Esophagus muscularis mucosa (tissue), 4 donors: ENCODE measurements at regions of chr3 and their contacts with region 1.

Region 1: DNA sequence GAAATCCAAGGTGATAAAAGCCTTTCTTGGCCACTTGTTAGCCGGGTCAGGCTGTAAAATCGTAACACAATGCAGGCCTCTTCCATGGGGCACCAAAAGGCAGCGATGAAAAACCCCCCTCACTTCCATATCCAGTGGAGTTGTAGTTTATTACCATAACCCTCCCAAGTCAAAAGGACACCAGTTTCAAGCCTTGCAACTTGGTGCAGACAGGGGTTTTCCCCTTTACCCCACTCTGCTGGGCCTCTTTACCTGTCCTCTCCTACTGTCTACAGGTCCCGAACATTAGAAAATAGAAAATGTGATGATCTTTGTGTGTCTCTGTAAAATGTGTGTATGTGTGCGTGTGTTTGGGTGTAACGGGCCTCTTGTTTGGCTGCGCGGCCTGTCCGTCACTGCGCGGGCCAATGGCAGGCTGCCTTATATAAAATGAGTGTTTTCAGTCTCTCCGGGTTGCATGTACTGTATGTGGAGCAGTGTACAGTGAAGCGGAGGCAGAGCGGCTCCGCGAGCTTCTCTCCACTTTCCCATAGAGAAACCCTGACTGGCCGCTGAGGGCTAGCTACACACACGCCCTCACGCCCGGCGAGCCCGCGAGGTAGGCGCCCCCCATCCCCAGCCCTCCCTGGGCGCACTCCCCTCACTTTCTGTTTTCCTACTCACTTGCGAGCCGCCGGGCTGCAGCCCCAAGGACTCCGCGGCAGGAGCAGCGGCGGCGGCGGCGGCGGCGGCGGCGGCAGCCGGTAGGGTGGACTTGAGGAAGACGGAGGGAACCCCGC is at the start of gene BBX:
- DNase-seq: peak; percentile 99
- H3K4me3 ChIP-seq: peak within 1 kb of the TSS; percentile 76 to 95 (median 86)
- H3K27ac ChIP-seq: peak within 1 kb of the TSS; percentile 90 to 97 (median 94)
- H3K4me1 ChIP-seq: peaks cover 9 to 24% (median 20%) of the 10 kb centered on the region in 4 donors
- H3K27me3 ChIP-seq: no peaks in the 10 kb centered on the region
- CTCF ChIP-seq: no peak
- EP300 ChIP-seq: no peak
- POLR2A ChIP-seq: peak; percentile 51
- total RNA-seq, gene BBX: 49.2 to 78.9 (median 77.9) TPM

Region 2: DNA sequence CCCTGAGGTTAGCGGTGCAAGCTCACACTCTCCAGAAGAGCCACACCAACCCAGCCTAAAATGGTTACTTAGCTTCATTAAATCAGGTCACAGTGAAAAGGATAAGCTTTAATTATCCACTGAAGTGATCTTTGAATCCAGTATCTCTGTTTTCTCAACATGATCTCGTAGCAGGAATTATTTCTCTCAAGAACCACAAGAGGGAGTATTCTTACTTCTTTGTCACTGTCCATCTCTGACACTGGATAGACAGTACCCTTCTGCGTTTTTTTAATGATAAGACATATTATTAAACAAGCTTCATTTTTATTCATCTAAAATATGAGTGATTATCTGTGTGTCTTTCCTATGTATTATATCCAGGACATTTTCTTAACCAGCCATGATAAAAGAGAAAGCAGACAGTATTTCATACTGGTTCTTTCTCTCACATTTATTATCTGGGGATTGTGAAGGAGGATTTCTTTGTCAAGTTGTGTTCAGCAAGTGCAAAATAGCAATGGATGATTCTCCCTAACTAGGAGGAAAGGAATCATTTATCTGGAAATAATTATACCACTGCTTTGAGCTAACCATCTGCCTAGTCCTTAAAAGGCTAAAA is 250.8 kb before region 1 on chr3:
- intact Hi-C with region 1: loop called (anchors 10 kb)
- DNase-seq: no peak
- H3K4me3 ChIP-seq: no peak overlapping the region
- H3K27ac ChIP-seq: no peak overlapping the region
- H3K4me1 ChIP-seq: peaks cover 0 to 6% (median 0%) of the 10 kb centered on the region in 4 donors
- H3K27me3 ChIP-seq: no peaks in the 10 kb centered on the region
- CTCF ChIP-seq: peak; percentile 62 to 74 (median 64)
- EP300 ChIP-seq: no peak
- POLR2A ChIP-seq: no peak

Region 3: GRCh38 chr3:107429320-107430181 is 93.1 kb before region 1 on chr3:
- intact Hi-C with region 1: loop called (anchors 2 kb)
- DNase-seq: no peak
- H3K4me3 ChIP-seq: peak overlapping the region; percentile 80 to 96 (median 87)
- H3K27ac ChIP-seq: peak overlapping the region; percentile 97 to 99 (median 97)
- H3K4me1 ChIP-seq: peaks cover 5 to 26% (median 18%) of the 10 kb centered on the region in 4 donors
- H3K27me3 ChIP-seq: no peaks in the 10 kb centered on the region
- CTCF ChIP-seq: peak; percentile 73 to 89 (median 88)
- EP300 ChIP-seq: no peak
- POLR2A ChIP-seq: no peak

Region 4: DNA sequence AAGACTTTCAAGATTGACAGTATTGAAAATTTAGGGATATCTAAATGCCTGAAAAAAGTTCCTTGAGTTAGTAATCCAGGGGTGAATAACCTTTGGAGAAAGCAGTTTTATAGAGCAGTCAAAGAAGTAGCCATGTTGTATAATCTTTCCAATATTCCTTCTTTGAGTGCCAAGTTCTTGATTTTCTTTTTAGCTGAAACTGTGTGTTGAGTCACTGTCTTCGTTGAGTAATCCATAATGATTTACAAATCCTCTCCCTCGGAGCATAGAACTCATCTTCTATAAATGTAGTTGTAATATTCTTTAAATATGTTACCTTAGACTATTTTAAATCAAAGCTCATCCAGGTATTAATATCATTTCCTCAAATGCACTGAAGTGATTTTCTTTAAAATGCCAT is 135.3 kb after region 1 on chr3:
- intact Hi-C with region 1: loop called (anchors 5 kb)
- DNase-seq: no peak
- H3K4me3 ChIP-seq: no peak overlapping the region
- H3K27ac ChIP-seq: no peak overlapping the region
- H3K4me1 ChIP-seq: peaks cover 21 to 45% (median 33%) of the 10 kb centered on the region in 4 donors
- H3K27me3 ChIP-seq: no peaks in the 10 kb centered on the region
- CTCF ChIP-seq: no peak
- EP300 ChIP-seq: no peak
- POLR2A ChIP-seq: no peak

Region 5: DNA sequence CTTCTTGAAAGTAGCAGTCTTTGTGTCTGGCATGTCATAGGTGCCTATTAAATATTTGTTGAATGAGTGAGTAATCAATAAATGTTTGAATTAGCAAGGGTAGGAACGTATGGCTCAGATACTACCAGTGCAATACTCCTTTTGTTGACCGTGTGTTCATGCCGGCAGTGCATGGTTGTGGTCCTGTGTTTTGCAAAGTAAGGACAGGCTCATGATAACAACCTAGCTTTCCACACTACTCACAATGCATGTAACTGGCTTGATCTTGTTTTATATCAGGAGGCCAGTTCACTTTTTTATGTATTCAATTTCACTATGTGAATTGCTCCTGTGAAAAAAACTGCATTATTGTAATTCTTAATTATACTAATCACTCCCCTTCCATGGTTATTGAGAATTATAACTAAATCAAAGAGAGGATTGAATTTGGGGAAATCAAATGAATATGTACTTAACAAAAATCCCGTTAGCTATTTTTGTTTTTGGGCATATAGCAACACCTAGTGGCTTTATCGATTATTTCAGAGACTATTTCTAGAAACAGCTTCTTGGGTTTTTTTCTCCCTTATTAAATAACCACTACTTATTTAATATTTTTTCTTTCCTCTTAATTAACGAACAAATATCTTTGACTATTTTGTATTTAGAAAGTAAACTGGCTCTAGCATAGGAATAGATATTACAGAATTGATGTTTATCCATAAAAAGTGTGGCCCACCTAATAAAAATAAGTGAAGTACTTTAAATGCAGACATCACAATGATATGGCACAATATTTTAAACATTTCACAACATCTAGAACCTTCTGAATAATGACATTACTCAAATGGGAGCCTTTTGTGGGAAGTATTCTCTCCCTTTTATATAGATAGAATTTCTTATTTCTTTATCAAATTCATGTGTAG is 218.5 kb after region 1 on chr3:
- intact Hi-C with region 1: no loop called
- DNase-seq: no peak
- H3K4me3 ChIP-seq: no peak overlapping the region
- H3K27ac ChIP-seq: no peak overlapping the region
- H3K4me1 ChIP-seq: no peaks in the 10 kb centered on the region
- H3K27me3 ChIP-seq: no peaks in the 10 kb centered on the region
- CTCF ChIP-seq: peak; percentile 56 to 58 (median 58)
- EP300 ChIP-seq: no peak
- POLR2A ChIP-seq: no peak